Head of caudate nucleus (tissue), 42 donors: ENCODE measurements at regions of chr7 and their contacts with region 1.

Region 1: GRCh38 chr7:105759670-105760550 is 116.5 kb downstream of the ATXN7L1 start:
- DNase-seq: peak in 41 of 42 donors; percentile 17 to 82 (median 62)

Region 2: GRCh38 chr7:105261688-105262087 is 498.2 kb before region 1 on chr7:
- intact Hi-C with region 1: no loop called
- DNase-seq: no peak

Region 3: GRCh38 chr7:106009403-106010226 is 249.7 kb after region 1 on chr7:
- intact Hi-C with region 1: loop called (anchors 10 kb)
- DNase-seq: peak; percentile 63 to 93 (median 84)

Region 4: GRCh38 chr7:106041140-106041717 is 281.3 kb after region 1 on chr7:
- intact Hi-C with region 1: loop called (anchors 10 kb)
- DNase-seq: peak in 9 of 42 donors; percentile 20 to 59 (median 33)

Region 5: DNA sequence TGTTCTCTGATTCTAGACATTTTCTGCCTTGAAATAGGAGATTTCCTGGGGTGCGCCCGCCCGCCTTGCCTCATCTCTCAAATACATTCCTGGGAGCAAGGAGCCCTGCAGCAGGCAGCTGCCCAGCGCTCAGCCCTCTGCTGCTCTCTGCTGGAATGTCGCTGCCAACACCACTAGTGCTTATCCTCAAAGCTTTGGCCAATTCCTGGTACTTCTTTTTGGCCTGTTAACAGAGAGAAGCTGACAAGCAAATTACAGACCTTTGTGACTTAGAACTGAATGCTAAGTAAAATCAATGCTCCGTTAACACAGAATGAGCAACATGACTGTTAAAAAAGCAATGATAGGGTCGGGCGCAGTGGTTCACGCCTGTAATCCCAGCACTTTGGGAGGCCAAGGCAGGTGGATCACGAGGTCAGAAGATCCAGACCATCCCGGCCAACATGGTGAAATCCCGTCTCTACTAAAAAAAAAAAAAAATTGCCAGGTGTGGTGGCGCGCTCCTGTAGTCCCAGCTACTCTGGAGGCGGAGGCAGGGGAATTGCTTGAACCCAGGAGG is 394.1 kb after region 1 on chr7:
- intact Hi-C with region 1: no loop called
- DNase-seq: peak; percentile 68 to 95 (median 90)